ENCODE measurements at regions of chr17 and their contacts with region 1.

Region 1: DNA sequence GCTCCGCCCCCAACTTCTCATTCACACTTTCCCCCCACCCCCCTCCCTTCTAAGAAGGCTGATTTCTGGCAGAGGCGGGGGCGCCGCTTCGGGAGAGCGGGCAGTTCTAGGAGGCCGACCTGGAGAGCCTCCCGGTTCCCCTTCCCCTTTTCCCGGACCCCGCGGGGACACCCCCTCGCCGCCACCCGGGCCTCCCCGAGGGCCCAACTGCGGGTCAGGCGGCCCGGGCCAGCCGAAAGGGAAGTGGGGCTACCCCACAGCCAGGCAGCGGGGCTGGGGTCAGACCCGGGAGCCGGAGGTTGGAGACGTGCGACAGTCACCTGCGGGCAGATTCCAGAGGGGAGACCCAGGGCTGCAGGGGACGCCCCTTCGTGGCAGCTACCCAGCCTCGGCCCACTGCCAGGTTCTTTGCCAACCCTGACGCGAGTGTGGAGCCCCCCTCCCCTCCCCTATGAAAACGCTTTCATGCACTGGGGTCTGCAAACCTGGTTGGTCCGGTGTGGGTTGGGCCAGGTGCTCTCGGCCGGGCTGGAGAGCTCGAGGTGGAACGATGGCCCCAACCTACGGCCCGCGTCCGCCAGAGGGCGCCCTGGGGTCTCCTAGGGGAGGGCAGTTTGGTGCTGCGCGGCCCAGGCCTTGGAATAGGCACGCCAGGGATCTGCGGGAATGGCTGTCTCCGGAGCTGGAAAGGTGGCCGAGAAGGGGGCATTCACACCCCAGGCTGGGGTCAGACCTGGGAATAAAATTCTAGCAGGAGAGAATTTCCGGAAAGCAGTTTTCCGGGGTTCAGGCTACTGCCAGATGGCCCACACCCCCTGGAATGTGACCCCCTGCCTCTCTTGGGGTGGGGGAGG is 721 bp upstream of the SOCS3 start:
- DNase-seq: peak; percentile 80
- ATAC-seq: peak; percentile 43
- H3K4me3 ChIP-seq: peak overlapping the region; percentile 38
- H3K27ac ChIP-seq: peak overlapping the region; percentile 75
- H3K4me1 ChIP-seq: peaks cover 13% of the 10 kb centered on the region
- H3K27me3 ChIP-seq: no peaks in the 10 kb centered on the region
- CTCF ChIP-seq: peak; percentile 90
- POLR2A ChIP-seq: no peak; the same call in 1 of the 2 replicates
- RAD21 ChIP-seq: peak; percentile 91

Region 2: DNA sequence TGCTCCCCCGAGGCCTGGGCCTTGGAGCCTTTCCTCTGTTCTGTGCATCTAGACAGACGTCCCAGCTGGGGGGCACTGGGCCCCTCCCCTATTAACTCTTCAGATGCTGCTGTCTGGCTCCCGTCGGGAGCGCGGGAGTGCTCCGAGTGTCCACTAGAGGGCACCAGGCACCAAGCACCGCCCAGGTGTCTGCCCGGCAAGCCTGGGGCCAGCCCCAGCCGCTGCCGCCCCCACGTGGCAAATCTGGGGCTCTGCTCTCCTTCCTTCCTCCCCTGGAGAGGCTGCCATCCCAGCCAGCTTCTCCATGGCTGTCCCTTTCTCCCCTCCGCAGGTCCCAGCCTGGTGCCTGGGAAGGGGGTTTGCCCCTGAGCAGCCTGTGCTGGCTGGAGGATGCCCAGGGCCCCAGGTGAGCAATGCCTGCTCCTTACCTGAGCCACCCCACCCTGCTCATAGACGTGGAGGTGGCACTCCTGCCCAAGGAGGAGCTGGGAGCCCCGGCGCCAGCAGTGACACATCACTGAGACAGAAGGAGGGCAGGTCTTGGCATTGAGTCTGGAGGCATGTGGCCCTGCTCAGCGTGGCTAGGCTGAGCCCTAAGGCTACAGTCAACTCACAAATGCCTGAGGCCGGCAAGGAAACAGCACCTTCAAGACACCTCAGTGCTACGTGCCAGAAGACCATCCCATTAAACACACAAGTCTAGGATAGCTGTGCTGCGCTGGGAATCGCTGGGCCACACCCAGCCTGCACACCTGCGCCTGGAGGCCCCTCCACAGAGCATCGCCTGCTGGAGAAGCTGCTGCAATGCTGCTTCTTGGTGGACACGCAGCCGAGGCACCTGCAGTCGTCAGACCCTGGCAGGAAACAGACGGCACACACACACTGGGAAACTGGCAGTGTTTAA is 109.5 kb before region 1 on chr17:
- CTCF ChIA-PET with region 1: no interaction called
- POLR2A ChIA-PET with region 1: no interaction called
- dilution Hi-C with region 1: no loop called
- in situ Hi-C with region 1: no loop called
- intact Hi-C with region 1: loop called (anchors 2 kb)
- DNase-seq: peak; percentile 76
- ATAC-seq: peak; percentile 91
- H3K4me3 ChIP-seq: no peak overlapping the region
- H3K27ac ChIP-seq: no peak overlapping the region
- H3K4me1 ChIP-seq: peaks cover 6% of the 10 kb centered on the region
- H3K27me3 ChIP-seq: peaks cover 3% of the 10 kb centered on the region; the same call in 1 of the 2 replicates
- CTCF ChIP-seq: peak; percentile 100
- POLR2A ChIP-seq: 0 out of 2 replicates have a peak, but pooled peaks have one; percentile 38
- RAD21 ChIP-seq: peak; percentile 98

Region 3: DNA sequence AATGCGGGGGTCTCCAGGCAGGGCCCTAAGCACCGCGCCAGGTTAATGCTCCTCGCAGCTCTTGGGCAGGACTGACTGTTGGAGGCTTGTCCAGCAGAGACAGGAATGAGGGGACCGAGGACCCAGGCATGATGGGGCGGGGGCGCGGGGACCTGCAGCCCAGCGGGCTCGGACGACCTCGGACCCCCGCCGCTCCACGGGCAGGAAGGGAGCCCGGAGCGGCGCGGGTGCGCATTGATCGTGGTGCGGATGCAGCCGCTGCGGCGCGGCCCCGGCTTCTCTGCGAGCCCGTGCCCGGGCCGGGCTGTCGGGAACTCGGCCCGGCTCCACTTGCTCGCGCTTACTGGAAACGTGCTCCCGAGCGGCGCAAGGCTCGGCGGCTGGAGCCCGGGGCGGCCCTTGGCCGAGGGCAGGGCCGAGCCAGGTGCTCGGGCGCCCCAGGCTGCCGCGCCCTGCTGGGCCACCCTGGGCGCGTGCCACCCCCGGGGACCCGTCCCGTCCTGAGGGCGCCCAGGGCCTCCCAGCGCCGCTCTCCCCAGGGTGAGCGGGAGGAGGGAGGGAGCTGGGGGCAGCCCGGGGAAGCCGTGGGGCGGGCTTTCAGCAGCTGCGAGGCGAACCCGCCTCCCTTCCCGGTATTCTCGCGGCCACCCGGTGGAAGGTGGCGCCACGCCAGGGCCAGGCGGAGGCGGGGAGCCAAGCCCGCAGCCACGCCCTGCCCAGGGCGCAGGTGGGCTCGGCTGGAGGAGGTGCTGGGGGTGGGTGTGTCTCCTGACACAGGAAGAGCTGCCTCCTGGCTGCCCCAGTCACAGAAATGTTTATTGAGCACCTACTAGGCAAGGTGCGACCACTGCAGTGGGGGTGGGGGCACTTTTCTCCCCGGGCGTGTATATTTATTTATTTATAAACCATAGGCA is 46.6 kb before region 1 on chr17:
- CTCF ChIA-PET with region 1: interaction called, 3 read pairs
- POLR2A ChIA-PET with region 1: no interaction called
- dilution Hi-C with region 1: no loop called
- in situ Hi-C with region 1: no loop called
- intact Hi-C with region 1: loop called (anchors 2 kb)
- DNase-seq: peak; percentile 59
- ATAC-seq: peak; percentile 71
- H3K4me3 ChIP-seq: peak overlapping the region; percentile 44
- H3K27ac ChIP-seq: peak overlapping the region; percentile 46
- H3K4me1 ChIP-seq: peaks cover 30% of the 10 kb centered on the region
- H3K27me3 ChIP-seq: no peaks in the 10 kb centered on the region
- CTCF ChIP-seq: no peak
- POLR2A ChIP-seq: 0 out of 2 replicates have a peak, but pooled peaks have one; percentile 28
- RAD21 ChIP-seq: no peak

Region 4: DNA sequence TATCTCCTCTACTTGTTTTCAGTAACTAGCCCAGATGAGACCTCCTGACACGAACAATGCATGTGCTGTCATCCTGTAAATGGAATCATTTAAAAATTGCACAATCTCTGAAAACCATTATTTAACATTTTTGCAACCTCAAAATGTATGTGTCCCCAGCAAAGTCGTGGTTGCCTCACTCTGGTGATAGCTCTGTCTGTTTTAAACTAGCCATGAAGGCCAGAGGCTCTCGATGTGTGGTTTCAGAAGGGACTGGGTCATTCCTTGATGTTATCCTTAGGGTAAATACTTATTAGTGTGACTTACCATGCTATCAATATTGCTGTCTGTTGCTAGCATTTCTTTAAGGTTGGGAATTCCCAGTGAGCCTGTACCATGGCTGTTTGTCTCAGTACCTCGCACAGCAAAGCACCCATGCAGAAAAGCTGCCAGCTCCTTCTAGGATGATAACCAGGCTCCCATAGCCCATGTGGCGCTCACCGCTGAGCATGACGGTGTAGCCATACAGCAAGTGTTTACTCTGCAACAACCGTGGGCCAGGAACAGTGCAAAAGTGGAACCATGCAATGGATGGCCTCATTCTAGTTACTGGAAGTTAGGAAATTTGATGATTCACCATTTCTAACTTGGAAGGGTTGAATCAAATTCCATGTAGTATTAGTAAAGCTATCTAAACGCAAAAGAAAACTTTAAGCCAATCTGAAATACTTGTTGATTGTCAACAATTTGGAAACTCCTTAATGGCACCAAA is 15.0 kb after region 1 on chr17:
- CTCF ChIA-PET with region 1: interaction called, 10 read pairs
- POLR2A ChIA-PET with region 1: no interaction called
- dilution Hi-C with region 1: no loop called
- in situ Hi-C with region 1: no loop called
- intact Hi-C with region 1: no loop called
- DNase-seq: peak; percentile 98
- ATAC-seq: peak; percentile 69
- H3K4me3 ChIP-seq: no peak overlapping the region
- H3K27ac ChIP-seq: peak overlapping the region; percentile 99
- H3K4me1 ChIP-seq: peaks cover 26% of the 10 kb centered on the region
- H3K27me3 ChIP-seq: no peaks in the 10 kb centered on the region
- CTCF ChIP-seq: no peak
- POLR2A ChIP-seq: peak; percentile 8; the same call in 1 of the 2 replicates
- RAD21 ChIP-seq: peak; percentile 5; the same call in 1 of the 2 replicates

Region 5: GRCh38 chr17:78421484-78422266 is 61.1 kb after region 1 on chr17:
- CTCF ChIA-PET with region 1: interaction called, 11 read pairs
- POLR2A ChIA-PET with region 1: no interaction called
- dilution Hi-C with region 1: no loop called
- in situ Hi-C with region 1: loop called (anchors 5 kb)
- intact Hi-C with region 1: loop called (anchors 1 kb)
- DNase-seq: peak; percentile 65
- ATAC-seq: peak; percentile 90
- H3K4me3 ChIP-seq: no peak overlapping the region
- H3K27ac ChIP-seq: no peak overlapping the region
- H3K4me1 ChIP-seq: peaks cover 10% of the 10 kb centered on the region
- H3K27me3 ChIP-seq: no peaks in the 10 kb centered on the region
- CTCF ChIP-seq: peak; percentile 99
- POLR2A ChIP-seq: no peak
- RAD21 ChIP-seq: peak; percentile 97

Region 6: GRCh38 chr17:78432226-78433012 is 71.8 kb after region 1 on chr17:
- CTCF ChIA-PET with region 1: no interaction called
- POLR2A ChIA-PET with region 1: no interaction called
- dilution Hi-C with region 1: no loop called
- in situ Hi-C with region 1: no loop called
- intact Hi-C with region 1: no loop called
- DNase-seq: no peak
- ATAC-seq: no peak
- H3K4me3 ChIP-seq: no peak overlapping the region
- H3K27ac ChIP-seq: no peak overlapping the region
- H3K4me1 ChIP-seq: peaks cover 14% of the 10 kb centered on the region; the same call in 1 of the 2 replicates
- H3K27me3 ChIP-seq: no peaks in the 10 kb centered on the region
- CTCF ChIP-seq: no peak
- POLR2A ChIP-seq: no peak
- RAD21 ChIP-seq: no peak

Measured in IMR-90 (cell line).